Endothelial cell of umbilical vein (primary cell): ENCODE measurements at regions of chr17 and their contacts with region 1.

Region 1: GRCh38 chr17:21119247-21119918 is 7.4 kb upstream of the DHRS7B start:
- DNase-seq: peak; percentile 61
- H3K4me3 ChIP-seq: peak overlapping the region in 1 of 3 experiments; percentile 9
- H3K27ac ChIP-seq: no peak overlapping the region
- H3K4me1 ChIP-seq: peaks cover 4% of the 10 kb centered on the region
- H3K27me3 ChIP-seq: peaks cover 0 to 2% of the 10 kb centered on the region in 2 experiments
- CTCF ChIP-seq: peak; percentile 81 to 86
- POLR2A ChIP-seq: no peak

Region 2: DNA sequence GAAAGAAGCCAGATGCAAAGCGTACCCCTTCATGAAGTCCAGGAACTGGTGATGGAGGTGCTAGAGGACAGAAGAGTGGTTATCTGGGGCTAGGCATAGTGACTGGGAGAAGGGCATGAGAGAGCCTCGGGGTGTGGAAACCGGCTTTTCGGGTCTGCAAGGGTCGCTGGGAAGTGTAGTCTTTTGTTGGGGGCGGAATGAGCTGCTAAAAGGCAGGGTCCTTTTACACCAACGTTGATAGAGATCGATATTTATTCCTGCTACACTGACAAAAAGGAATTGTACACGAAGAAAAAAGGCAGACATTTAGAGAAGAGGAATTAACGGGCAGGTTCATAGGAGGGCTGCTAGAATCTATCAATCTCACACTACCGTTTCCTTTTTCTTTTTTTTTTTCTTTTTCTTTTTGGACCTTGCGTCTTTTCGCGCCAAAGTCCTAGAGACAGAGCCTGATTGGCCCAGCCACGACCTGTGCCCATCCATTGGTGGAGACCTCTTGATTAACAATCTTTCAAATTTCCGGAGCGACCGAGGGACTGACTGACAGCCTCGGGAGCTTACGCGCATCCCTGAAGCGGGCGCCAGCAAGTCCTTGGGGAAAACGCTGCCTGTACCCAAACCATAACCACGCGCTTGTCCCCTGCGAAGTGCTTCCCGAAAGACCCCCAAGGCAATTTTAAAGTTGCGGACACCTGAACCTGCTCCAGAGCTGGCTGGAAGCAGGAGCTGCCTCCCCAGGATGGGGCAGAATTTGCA is 20.3 kb before region 1 on chr17:
- CTCF ChIA-PET with region 1: interaction called, 26 read pairs
- POLR2A ChIA-PET with region 1: no interaction called
- dilution Hi-C with region 1: no loop called
- intact Hi-C with region 1: no loop called
- DNase-seq: peak; percentile 72
- H3K4me3 ChIP-seq: peak overlapping the region; percentile 39 to 82 (median 66)
- H3K27ac ChIP-seq: no peak overlapping the region
- H3K4me1 ChIP-seq: peaks cover 5% of the 10 kb centered on the region
- H3K27me3 ChIP-seq: peaks cover 0 to 2% of the 10 kb centered on the region in 2 experiments
- CTCF ChIP-seq: no peak
- POLR2A ChIP-seq: no peak

Region 3: GRCh38 chr17:21108651-21109050 is 10.7 kb before region 1 on chr17:
- CTCF ChIA-PET with region 1: interaction called, 11 read pairs
- POLR2A ChIA-PET with region 1: no interaction called
- dilution Hi-C with region 1: no loop called
- intact Hi-C with region 1: no loop called
- DNase-seq: no peak
- H3K4me3 ChIP-seq: no peak overlapping the region
- H3K27ac ChIP-seq: no peak overlapping the region
- H3K4me1 ChIP-seq: no peaks in the 10 kb centered on the region
- H3K27me3 ChIP-seq: peaks cover 0 to 7% of the 10 kb centered on the region in 2 experiments
- CTCF ChIP-seq: no peak
- POLR2A ChIP-seq: no peak

Region 4: DNA sequence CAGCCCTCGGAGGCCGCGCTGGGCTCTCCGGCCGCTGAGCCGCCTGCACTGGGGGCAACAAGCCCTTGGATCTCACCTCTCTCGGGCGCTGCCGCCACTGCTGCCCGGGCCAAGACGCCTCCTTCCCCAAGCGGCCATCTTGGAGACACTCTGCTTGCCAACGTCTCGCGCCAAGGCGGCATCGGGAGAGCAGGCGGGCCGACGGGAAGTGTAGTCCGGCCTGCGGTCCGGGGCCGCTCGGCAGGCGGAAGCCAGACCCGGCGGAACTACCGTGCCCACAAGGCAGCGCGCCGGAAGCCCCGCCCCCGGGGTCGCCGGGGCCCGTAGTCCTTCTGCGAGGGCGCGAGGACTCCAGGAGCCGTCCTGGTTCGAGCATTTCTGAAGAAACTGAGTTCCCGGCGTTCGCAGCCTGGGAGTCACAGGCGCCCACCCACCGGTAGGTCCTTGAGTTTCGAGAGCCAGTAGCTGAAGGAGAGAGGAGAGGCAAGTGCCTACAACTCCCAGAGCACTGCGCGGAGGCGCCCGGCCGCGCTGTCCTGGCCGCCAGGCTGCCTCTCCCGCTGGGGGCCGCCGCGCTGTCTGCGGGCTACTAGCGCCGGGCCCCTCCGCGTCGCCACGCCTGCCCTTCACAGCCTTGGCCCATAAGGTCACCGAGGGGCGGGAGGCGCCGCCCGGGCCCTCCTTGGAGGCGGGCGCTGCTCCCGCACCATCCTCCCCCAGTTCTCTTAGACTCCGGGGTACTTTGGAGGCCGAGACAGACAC is 94.8 kb after region 1 on chr17 and contains the start of gene TMEM11:
- CTCF ChIA-PET with region 1: interaction called, 7 read pairs
- POLR2A ChIA-PET with region 1: no interaction called
- dilution Hi-C with region 1: no loop called
- intact Hi-C with region 1: loop called (anchors 2 kb)
- DNase-seq: peak; percentile 97
- H3K4me3 ChIP-seq: peak within 1 kb of the TSS; percentile 73 to 96 (median 96)
- H3K27ac ChIP-seq: peak within 1 kb of the TSS; percentile 77
- H3K4me1 ChIP-seq: peaks cover 20% of the 10 kb centered on the region
- H3K27me3 ChIP-seq: no peaks in the 10 kb centered on the region
- CTCF ChIP-seq: peak in 1 of 2 donors; percentile 5
- POLR2A ChIP-seq: peak; percentile 58
- total RNA-seq, gene TMEM11: 27.4 and 28.8 TPM in 2 replicates

Region 5: DNA sequence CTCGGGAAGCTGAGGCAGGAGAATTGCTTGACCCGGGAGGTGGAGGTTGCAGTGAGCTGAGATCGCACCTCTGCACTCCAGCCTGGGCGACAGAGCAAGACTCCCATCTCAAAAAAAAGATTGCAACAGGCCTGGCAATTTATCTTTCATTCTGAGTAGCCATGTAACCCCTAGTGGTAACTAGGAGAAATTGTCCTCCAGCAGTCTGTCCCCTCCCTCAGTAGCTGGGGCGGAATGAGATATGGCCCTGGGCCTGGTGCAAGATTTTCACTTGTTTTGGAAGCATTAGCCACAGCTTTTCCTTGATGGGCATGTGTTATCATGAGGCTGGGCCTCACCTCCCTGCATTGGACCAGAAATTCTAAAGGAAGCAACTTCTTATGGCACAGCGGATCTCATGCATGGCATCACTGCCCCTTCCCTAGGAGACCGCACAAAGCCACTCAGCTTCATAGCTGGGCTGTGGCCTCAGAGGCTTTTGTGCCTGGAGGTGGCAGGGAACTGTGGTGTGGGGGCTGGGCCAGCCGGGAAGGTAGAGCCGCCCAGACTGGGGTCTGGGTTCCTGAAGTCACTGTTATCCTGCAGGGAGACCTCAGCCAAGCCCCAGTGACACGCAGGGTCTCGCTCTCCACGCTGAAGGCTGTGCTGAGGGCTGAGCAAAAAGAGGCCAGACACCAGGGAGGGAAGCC is 120.4 kb after region 1 on chr17:
- CTCF ChIA-PET with region 1: interaction called, 18 read pairs
- POLR2A ChIA-PET with region 1: no interaction called
- dilution Hi-C with region 1: no loop called
- intact Hi-C with region 1: no loop called
- DNase-seq: no peak
- H3K4me3 ChIP-seq: no peak overlapping the region
- H3K27ac ChIP-seq: no peak overlapping the region
- H3K4me1 ChIP-seq: no peaks in the 10 kb centered on the region
- H3K27me3 ChIP-seq: peaks cover 0 to 3% of the 10 kb centered on the region in 2 experiments
- CTCF ChIP-seq: peak; percentile 21 to 52
- POLR2A ChIP-seq: no peak